CD8-positive, alpha-beta T cell (primary cell): ENCODE measurements at regions of chr4 and their contacts with region 1.

Region 1: GRCh38 chr4:176319704-176320339 is at the start of gene SPCS3:
- DNase-seq: peak; percentile 90 to 98 (median 95)
- ATAC-seq: peak; percentile 92
- H3K4me3 ChIP-seq: peak within 1 kb of the TSS; percentile 88 to 93
- H3K4me3 Mint-ChIP-seq: peak within 1 kb of the TSS; percentile 90
- H3K27ac ChIP-seq: peak within 1 kb of the TSS; percentile 91 to 96
- H3K27ac Mint-ChIP-seq: peak within 1 kb of the TSS; percentile 96
- H3K4me1 ChIP-seq: peaks cover 38% of the 10 kb centered on the region
- H3K4me1 Mint-ChIP-seq: peaks cover 54% of the 10 kb centered on the region
- H3K27me3 ChIP-seq: no peaks in the 10 kb centered on the region
- H3K27me3 Mint-ChIP-seq: no peaks in the 10 kb centered on the region
- CTCF ChIP-seq: no peak
- total RNA-seq, gene SPCS3: 162 to 170 TPM

Region 2: DNA sequence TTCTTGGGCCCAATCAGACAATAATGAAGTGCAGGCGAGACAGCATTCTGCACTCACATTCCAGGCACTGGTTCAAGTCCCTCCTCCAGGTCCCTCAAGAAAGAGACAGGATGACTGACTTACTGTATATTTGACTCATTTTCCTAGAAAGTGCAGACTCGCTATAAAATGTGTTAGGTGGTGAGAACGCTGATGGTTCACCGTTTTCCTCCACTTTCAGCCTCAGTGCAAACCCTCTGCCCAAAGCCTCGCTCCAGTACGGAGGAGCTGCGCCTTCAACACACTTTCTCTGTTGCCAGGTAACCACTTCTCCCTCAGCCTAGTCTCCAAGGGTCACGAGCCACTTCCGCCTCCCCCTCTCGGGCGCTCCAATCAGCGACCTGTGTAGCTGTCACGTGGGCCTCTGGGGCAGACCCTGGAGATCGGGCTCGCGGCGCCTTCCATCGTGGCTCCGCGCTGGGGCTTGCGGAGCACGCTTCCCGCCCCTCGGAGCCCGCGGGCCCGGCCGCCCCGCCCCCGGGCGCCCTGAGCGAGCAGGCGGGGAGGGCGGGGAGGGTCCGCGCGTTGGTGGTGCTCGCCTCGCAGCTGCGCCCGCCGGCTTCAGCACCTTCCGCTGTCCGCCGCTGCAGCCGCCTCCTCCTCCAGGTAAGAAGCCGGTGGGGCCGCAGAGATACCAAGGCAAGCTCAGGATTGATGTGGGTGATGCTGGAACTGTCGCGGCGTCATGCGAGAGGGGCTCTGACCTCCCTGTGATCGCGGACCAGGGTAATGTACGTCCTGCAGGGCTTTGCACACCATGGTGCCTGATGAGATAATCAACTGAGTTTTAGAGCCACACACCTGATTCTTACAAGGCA is 254.2 kb before region 1 on chr4 and contains the start of gene WDR17:
- CTCF ChIA-PET with region 1: no interaction called
- POLR2A ChIA-PET with region 1: no interaction called
- intact Hi-C with region 1: loop called in 1 of 2 experiments (anchors 5 kb)
- DNase-seq: peak; percentile 25 to 84 (median 66)
- ATAC-seq: peak; percentile 88
- H3K4me3 ChIP-seq: peak within 1 kb of the TSS; percentile 47 to 51
- H3K4me3 Mint-ChIP-seq: peak within 1 kb of the TSS; percentile 85
- H3K27ac ChIP-seq: no peak within 1 kb of the TSS
- H3K27ac Mint-ChIP-seq: no peak within 1 kb of the TSS
- H3K4me1 ChIP-seq: peaks cover 4% of the 10 kb centered on the region
- H3K4me1 Mint-ChIP-seq: peaks cover 10% of the 10 kb centered on the region
- H3K27me3 ChIP-seq: no peaks in the 10 kb centered on the region
- H3K27me3 Mint-ChIP-seq: peaks cover 26% of the 10 kb centered on the region
- CTCF ChIP-seq: no peak
- total RNA-seq, gene WDR17: 0.28 TPM in 1 of 2 experiments, not detected in the other

Region 3: DNA sequence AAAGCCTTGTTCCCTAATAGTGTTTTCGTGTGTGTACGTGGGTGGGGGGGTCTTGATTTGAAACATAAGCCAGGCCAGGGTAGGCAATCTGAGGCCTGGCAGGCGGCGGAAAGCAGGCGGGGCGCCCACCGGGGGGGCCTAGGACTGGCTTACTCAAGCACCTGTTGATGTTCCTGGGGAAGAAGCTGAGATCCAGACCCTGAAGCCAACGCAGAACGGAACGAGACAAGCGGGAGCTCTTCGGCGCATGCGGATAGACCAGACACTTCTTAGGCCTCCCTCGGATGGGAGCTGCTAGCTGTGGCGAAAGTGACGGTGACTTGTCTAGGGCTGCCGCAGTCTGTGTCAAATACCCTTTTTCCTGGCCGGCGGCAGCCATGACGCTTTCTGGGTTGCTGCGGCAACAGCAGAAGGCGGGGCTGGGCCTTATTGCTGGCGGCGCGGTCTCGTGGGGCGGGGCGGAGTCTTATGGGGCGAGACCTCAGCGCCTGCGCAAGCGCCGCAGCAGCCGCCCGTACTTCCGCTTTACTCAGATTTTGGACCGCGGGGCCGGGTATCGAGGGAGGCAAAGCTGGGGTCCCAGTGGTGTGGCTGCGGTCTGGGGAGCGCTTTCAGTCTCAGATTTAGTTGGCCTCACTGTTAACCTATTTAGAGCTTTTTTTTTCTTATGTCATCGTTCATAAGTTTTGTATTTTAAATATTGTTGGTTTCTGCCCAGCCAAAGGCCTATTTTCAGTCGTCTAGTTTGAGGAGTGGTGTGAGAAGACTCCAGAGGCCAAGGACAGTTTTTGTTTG is 124.4 kb before region 1 on chr4 and contains the start of gene SPATA4:
- CTCF ChIA-PET with region 1: no interaction called
- POLR2A ChIA-PET with region 1: interaction called, 3 read pairs
- intact Hi-C with region 1: loop called (anchors 1 kb)
- DNase-seq: peak; percentile 89 to 96 (median 94)
- ATAC-seq: peak; percentile 98
- H3K4me3 ChIP-seq: peak within 1 kb of the TSS; percentile 53 to 65
- H3K4me3 Mint-ChIP-seq: peak within 1 kb of the TSS; percentile 86
- H3K27ac ChIP-seq: peak within 1 kb of the TSS; percentile 34 to 66
- H3K27ac Mint-ChIP-seq: peak within 1 kb of the TSS; percentile 86
- H3K4me1 ChIP-seq: peaks cover 4% of the 10 kb centered on the region
- H3K4me1 Mint-ChIP-seq: peaks cover 9% of the 10 kb centered on the region
- H3K27me3 ChIP-seq: peaks cover 0 to 2% of the 10 kb centered on the region in 2 experiments
- H3K27me3 Mint-ChIP-seq: peaks cover 23% of the 10 kb centered on the region
- CTCF ChIP-seq: no peak
- total RNA-seq, gene SPATA4: not detected

Region 4: GRCh38 chr4:177322266-177322665 is 1002.4 kb after region 1 on chr4:
- CTCF ChIA-PET with region 1: no interaction called
- POLR2A ChIA-PET with region 1: no interaction called
- intact Hi-C with region 1: no loop called
- DNase-seq: no peak
- ATAC-seq: no peak
- H3K4me3 ChIP-seq: no peak overlapping the region
- H3K4me3 Mint-ChIP-seq: no peak overlapping the region
- H3K27ac ChIP-seq: no peak overlapping the region
- H3K27ac Mint-ChIP-seq: no peak overlapping the region
- H3K4me1 ChIP-seq: peaks cover 4% of the 10 kb centered on the region
- H3K4me1 Mint-ChIP-seq: peaks cover 28% of the 10 kb centered on the region
- H3K27me3 ChIP-seq: no peaks in the 10 kb centered on the region
- H3K27me3 Mint-ChIP-seq: no peaks in the 10 kb centered on the region
- CTCF ChIP-seq: no peak